OCI-LY7 (cell line): ENCODE measurements at regions of chr2 and their contacts with region 1.

Region 1: DNA sequence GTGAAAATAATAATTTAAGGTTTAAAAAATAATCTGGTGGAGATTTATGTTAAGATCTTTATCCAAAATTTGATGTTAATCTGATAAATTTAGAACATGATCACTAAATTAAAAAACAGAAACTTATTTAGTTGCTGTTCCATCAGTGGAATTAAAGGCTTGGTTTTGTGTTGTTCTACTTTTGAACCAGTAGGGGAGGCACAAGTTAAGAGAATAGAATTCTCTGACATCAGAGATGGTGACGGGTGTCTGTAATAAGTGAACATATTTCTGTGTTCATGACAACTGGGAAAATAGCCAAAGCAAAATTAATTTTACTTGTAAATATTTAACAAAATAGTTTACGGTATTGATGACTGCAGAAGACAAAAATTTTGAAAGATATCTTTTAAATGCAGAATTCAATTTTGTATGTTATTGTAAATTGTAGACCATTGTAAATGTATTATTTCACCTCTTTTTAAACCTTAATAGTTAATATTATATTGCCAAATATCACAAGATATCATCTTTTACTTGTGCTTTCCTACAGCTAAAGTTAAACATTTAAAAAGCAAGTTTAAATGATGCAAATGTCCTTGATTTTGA is 106.0 kb downstream of the UBR3 start:
- DNase-seq: peak; percentile 33
- H3K4me3 ChIP-seq: no peak overlapping the region
- H3K27ac ChIP-seq: no peak overlapping the region
- H3K4me1 ChIP-seq: no peaks in the 10 kb centered on the region
- CTCF ChIP-seq: peak; percentile 79

Region 2: GRCh38 chr2:169452080-169452479 is 481.1 kb before region 1 on chr2:
- CTCF ChIA-PET with region 1: no interaction called
- POLR2A ChIA-PET with region 1: no interaction called
- intact Hi-C with region 1: loop called (anchors 5 kb)
- DNase-seq: peak; percentile 48
- H3K4me3 ChIP-seq: no peak overlapping the region
- H3K27ac ChIP-seq: no peak overlapping the region
- H3K4me1 ChIP-seq: no peaks in the 10 kb centered on the region
- CTCF ChIP-seq: peak; percentile 74

Region 3: DNA sequence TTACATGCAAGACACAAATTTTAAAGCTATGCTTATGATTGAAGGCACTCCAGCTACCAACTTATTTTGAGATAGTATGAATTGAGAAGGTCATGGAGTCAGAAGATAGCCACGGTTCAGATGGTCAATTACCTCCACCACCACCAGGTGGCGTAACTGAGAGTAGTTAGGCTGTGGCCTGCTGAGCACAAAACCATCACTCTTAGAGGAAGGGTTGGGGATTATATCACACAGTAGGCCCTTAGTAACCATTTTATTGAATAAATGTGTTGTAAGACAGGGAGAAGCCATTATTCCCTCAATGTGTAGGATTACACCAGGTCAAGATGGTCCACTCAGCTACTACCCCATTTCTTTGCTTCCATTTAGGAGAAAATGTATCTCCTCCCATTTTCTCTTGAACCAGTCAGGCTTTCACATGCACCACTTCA is 404.9 kb before region 1 on chr2:
- CTCF ChIA-PET with region 1: no interaction called
- POLR2A ChIA-PET with region 1: no interaction called
- intact Hi-C with region 1: loop called (anchors 5 kb)
- DNase-seq: peak; percentile 75
- H3K4me3 ChIP-seq: no peak overlapping the region
- H3K27ac ChIP-seq: no peak overlapping the region
- H3K4me1 ChIP-seq: no peaks in the 10 kb centered on the region
- CTCF ChIP-seq: peak; percentile 96

Region 4: GRCh38 chr2:169824373-169825333 is 108.6 kb before region 1 on chr2 and contains the start of gene METTL5:
- CTCF ChIA-PET with region 1: interaction called, 3 read pairs
- POLR2A ChIA-PET with region 1: interaction called, 4 read pairs
- intact Hi-C with region 1: loop called (anchors 1 kb)
- DNase-seq: peak; percentile 85
- H3K4me3 ChIP-seq: peak within 1 kb of the TSS; percentile 74
- H3K27ac ChIP-seq: peak within 1 kb of the TSS; percentile 24
- H3K4me1 ChIP-seq: peaks cover 38% of the 10 kb centered on the region
- CTCF ChIP-seq: peak; percentile 95
- total RNA-seq, gene METTL5: 52.3 and 56.7 TPM in 2 replicates

Region 5: DNA sequence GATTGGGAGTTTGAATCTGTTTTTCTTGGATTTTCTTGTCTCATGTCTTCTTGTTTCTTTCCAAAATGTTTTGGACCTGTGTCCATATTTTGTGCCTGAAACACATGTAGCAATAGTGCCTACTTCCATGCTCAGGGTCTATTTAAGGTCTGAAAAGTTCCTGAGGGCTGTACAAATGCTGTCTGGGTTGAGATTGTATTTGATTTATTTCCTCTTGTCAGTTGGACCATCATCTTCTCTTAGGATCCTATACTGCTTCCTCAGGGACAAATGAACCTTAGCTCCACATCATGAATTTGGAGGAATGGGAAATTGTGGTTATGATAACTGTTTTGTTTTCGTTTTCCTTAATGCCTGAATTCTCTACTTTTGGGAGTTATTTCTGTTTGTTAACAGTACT is 46.1 kb before region 1 on chr2:
- CTCF ChIA-PET with region 1: no interaction called
- POLR2A ChIA-PET with region 1: no interaction called
- intact Hi-C with region 1: no loop called
- DNase-seq: no peak
- H3K4me3 ChIP-seq: no peak overlapping the region
- H3K27ac ChIP-seq: no peak overlapping the region
- H3K4me1 ChIP-seq: no peaks in the 10 kb centered on the region
- CTCF ChIP-seq: no peak